CD8-positive, alpha-beta memory T cell (primary cell): ENCODE measurements at regions of chr5 and their contacts with region 1.

Region 1: GRCh38 chr5:43120720-43121564 is at the start of gene ZNF131:
- DNase-seq: peak; percentile 94 to 99 (median 96)
- H3K4me3 ChIP-seq: peak within 1 kb of the TSS; percentile 89
- H3K4me3 Mint-ChIP-seq: peak within 1 kb of the TSS; percentile 90 to 99 (median 93)
- H3K27ac ChIP-seq: peak within 1 kb of the TSS; percentile 97
- H3K27ac Mint-ChIP-seq: peak within 1 kb of the TSS; percentile 84 to 99 (median 96)
- H3K4me1 ChIP-seq: peaks cover 45% of the 10 kb centered on the region
- H3K4me1 Mint-ChIP-seq: peaks cover 33 to 43% (median 40%) of the 10 kb centered on the region in 3 donors
- H3K27me3 ChIP-seq: no peaks in the 10 kb centered on the region
- H3K27me3 Mint-ChIP-seq: no peaks in the 10 kb centered on the region
- total RNA-seq, gene ZNF131: 39.2 to 39.5 TPM

Region 2: GRCh38 chr5:42950440-42951292 is 170.3 kb before region 1 on chr5:
- CTCF ChIA-PET with region 1: interaction called, 10 read pairs
- POLR2A ChIA-PET with region 1: interaction called, 29 read pairs
- DNase-seq: peak; percentile 43 to 81 (median 61)
- H3K4me3 ChIP-seq: peak overlapping the region; percentile 97
- H3K4me3 Mint-ChIP-seq: peak overlapping the region; percentile 91 to 98 (median 95)
- H3K27ac ChIP-seq: peak overlapping the region; percentile 98
- H3K27ac Mint-ChIP-seq: peak overlapping the region; percentile 99 to 100 (median 100)
- H3K4me1 ChIP-seq: peaks cover 27% of the 10 kb centered on the region
- H3K4me1 Mint-ChIP-seq: peaks cover 29 to 50% (median 39%) of the 10 kb centered on the region in 3 donors
- H3K27me3 ChIP-seq: no peaks in the 10 kb centered on the region
- H3K27me3 Mint-ChIP-seq: peaks cover 0 to 16% of the 10 kb centered on the region in 2 donors

Region 3: DNA sequence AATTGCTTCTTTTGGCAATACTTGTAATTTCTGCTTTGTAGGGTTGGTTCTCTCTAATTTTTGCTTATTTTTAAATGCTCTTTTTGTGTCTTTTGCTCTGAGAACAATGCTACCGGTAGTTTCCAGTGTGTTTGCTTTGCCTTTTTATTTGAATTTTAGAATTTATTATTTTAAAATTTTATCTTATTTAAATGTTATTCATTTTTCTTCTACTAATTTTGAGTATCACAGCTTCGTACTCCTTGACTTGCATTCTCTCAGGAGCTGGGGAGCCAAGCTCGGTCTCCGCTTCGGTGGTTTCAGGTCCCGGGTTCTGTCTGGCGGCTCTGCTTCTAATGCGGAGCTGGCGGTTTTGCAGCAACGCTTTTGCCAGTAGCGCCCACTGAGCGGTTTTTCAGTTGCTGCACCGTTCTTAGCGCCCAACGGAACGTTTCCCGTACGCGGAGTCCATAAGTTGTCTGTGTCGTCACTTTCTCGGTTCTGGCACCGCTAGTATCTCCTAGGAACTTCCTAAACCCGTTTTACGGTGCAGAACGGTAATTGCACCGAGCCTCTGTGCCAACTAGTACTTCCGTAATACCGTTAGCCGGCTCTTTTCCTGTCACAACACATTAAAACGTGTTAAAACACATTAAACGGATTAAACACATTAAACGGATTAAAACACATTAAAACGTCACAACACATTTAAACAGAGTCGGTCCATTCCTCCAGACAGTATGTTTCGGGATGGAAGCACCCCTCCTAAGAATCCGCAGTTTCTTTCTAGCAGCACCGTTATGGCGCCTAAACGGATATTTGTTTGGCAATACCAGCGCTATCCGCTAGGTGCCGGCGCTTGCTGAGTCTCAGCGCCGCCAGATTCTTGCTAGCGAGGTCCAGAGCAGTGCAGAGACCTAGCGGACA is 126.4 kb before region 1 on chr5:
- CTCF ChIA-PET with region 1: interaction called, 12 read pairs
- POLR2A ChIA-PET with region 1: interaction called, 57 read pairs
- DNase-seq: peak; percentile 74 to 91 (median 84)
- H3K4me3 ChIP-seq: peak overlapping the region; percentile 97
- H3K4me3 Mint-ChIP-seq: peak overlapping the region; percentile 94 to 100 (median 99)
- H3K27ac ChIP-seq: peak overlapping the region; percentile 97
- H3K27ac Mint-ChIP-seq: peak overlapping the region; percentile 97 to 100 (median 100)
- H3K4me1 ChIP-seq: peaks cover 29% of the 10 kb centered on the region
- H3K4me1 Mint-ChIP-seq: peaks cover 31 to 35% (median 35%) of the 10 kb centered on the region in 3 donors
- H3K27me3 ChIP-seq: no peaks in the 10 kb centered on the region
- H3K27me3 Mint-ChIP-seq: peaks cover 0 to 13% of the 10 kb centered on the region in 2 donors

Region 4: GRCh38 chr5:43019614-43020293 is 101.2 kb before region 1 on chr5:
- CTCF ChIA-PET with region 1: interaction called, 10 read pairs
- POLR2A ChIA-PET with region 1: interaction called, 45 read pairs
- DNase-seq: peak; percentile 75 to 93 (median 87)
- H3K4me3 ChIP-seq: peak overlapping the region; percentile 87
- H3K4me3 Mint-ChIP-seq: peak overlapping the region; percentile 97 to 100 (median 99)
- H3K27ac ChIP-seq: peak overlapping the region; percentile 96
- H3K27ac Mint-ChIP-seq: peak overlapping the region; percentile 98 to 100 (median 100)
- H3K4me1 ChIP-seq: peaks cover 36% of the 10 kb centered on the region
- H3K4me1 Mint-ChIP-seq: peaks cover 40 to 56% (median 54%) of the 10 kb centered on the region in 3 donors
- H3K27me3 ChIP-seq: no peaks in the 10 kb centered on the region
- H3K27me3 Mint-ChIP-seq: peaks cover 0 to 8% of the 10 kb centered on the region in 2 donors

Region 5: DNA sequence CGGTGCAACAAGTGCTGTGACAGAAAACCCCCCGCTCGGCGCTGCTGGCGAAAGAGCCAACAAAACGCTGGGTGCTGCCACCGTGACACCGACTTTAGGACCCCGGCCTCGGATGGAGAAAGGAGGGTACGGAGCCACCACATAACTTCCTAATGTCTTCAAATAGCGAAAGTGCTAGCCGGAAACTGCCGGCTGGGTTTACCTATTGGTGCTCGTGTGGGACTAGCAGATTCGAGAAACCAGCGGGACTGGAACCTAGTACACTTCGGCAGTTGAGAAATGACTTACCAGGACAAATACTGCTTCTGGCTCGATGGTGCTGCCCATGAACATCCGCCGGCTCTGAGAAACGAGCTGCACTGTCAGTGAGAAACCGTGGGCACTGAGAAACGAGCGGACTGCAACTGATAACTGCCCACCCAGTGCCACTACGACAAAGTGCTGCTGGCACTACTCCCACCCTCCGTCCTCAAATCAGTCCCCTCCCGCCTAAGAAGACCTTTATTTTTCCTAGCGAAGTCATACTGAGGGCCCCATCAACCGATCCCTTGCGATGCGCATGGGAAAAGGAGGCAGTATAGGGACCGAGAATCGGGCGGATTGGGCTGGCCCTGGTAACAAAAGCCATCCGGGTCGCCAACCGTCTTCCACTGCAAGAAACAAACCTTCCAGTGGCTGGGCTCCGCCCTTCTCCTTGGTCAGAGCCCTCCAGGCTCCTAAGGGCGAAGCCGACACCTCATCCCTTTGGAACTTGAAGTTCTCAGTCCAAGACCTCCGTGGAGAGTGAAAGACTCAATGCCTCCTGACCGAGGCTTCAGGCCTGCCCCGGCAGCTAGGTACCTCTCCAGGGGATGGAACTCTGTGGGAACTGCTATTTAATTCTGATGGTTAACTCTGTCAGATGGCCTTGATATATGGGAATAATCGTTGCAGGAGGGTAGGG is 53.9 kb before region 1 on chr5:
- CTCF ChIA-PET with region 1: interaction called, 12 read pairs
- POLR2A ChIA-PET with region 1: interaction called, 34 read pairs
- DNase-seq: peak; percentile 75 to 92 (median 87)
- H3K4me3 ChIP-seq: peak overlapping the region; percentile 99
- H3K4me3 Mint-ChIP-seq: peak overlapping the region; percentile 91 to 99 (median 98)
- H3K27ac ChIP-seq: peak overlapping the region; percentile 99
- H3K27ac Mint-ChIP-seq: peak overlapping the region; percentile 96 to 100 (median 99)
- H3K4me1 ChIP-seq: peaks cover 31% of the 10 kb centered on the region
- H3K4me1 Mint-ChIP-seq: peaks cover 42 to 59% (median 52%) of the 10 kb centered on the region in 3 donors
- H3K27me3 ChIP-seq: no peaks in the 10 kb centered on the region
- H3K27me3 Mint-ChIP-seq: no peaks in the 10 kb centered on the region

Region 6: GRCh38 chr5:43105369-43106289 is 15.3 kb before region 1 on chr5:
- CTCF ChIA-PET with region 1: interaction called, 121 read pairs
- POLR2A ChIA-PET with region 1: interaction called, 16 read pairs
- DNase-seq: peak; percentile 80 to 92 (median 84)
- H3K4me3 ChIP-seq: peak overlapping the region; percentile 74
- H3K4me3 Mint-ChIP-seq: peak overlapping the region; percentile 77 to 91 (median 85)
- H3K27ac ChIP-seq: peak overlapping the region; percentile 19
- H3K27ac Mint-ChIP-seq: peak overlapping the region; percentile 72 to 95 (median 90)
- H3K4me1 ChIP-seq: peaks cover 21% of the 10 kb centered on the region
- H3K4me1 Mint-ChIP-seq: peaks cover 33 to 45% (median 44%) of the 10 kb centered on the region in 3 donors
- H3K27me3 ChIP-seq: no peaks in the 10 kb centered on the region
- H3K27me3 Mint-ChIP-seq: no peaks in the 10 kb centered on the region

Region 7: DNA sequence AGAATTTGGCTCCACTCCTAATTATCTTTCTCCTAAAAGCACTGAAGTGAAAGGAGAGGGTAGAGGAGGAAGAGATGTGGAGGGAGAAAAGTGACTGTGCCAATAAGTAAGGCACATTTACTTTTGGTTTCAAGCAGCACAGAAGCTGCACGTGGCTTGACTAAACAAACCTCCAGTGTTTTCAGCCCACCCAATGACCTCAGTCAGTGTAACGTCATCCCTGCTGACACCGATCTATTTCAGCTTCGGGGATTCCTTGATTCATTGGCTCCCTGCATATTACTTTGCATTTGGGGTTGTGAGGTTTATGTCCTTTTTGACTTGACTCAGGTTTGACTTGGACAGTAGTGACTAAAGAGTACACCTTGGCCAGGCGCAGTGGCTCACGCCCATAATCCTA is 35.4 kb after region 1 on chr5:
- CTCF ChIA-PET with region 1: no interaction called
- POLR2A ChIA-PET with region 1: no interaction called
- DNase-seq: no peak
- H3K4me3 ChIP-seq: no peak overlapping the region
- H3K4me3 Mint-ChIP-seq: no peak overlapping the region
- H3K27ac ChIP-seq: no peak overlapping the region
- H3K27ac Mint-ChIP-seq: peak overlapping the region in 4 of 8 donors; percentile 10 to 55 (median 44)
- H3K4me1 ChIP-seq: no peaks in the 10 kb centered on the region
- H3K4me1 Mint-ChIP-seq: peaks cover 26 to 54% (median 47%) of the 10 kb centered on the region in 3 donors
- H3K27me3 ChIP-seq: no peaks in the 10 kb centered on the region
- H3K27me3 Mint-ChIP-seq: no peaks in the 10 kb centered on the region

Region 8: GRCh38 chr5:43313035-43313853 is 192.3 kb after region 1 on chr5 and contains the start of gene HMGCS1:
- CTCF ChIA-PET with region 1: interaction called, 7 read pairs
- POLR2A ChIA-PET with region 1: interaction called, 14 read pairs
- DNase-seq: peak; percentile 97 to 99 (median 99)
- H3K4me3 ChIP-seq: peak within 1 kb of the TSS; percentile 77
- H3K4me3 Mint-ChIP-seq: peak within 1 kb of the TSS; percentile 88 to 97 (median 95)
- H3K27ac ChIP-seq: peak within 1 kb of the TSS; percentile 97
- H3K27ac Mint-ChIP-seq: peak within 1 kb of the TSS; percentile 82 to 96 (median 95)
- H3K4me1 ChIP-seq: peaks cover 36% of the 10 kb centered on the region
- H3K4me1 Mint-ChIP-seq: peaks cover 25 to 45% (median 42%) of the 10 kb centered on the region in 3 donors
- H3K27me3 ChIP-seq: no peaks in the 10 kb centered on the region
- H3K27me3 Mint-ChIP-seq: peaks cover 3 to 8% of the 10 kb centered on the region in 2 donors
- total RNA-seq, gene HMGCS1: 70.3 to 75.1 TPM